ENCODE measurements at regions of chr16 and their contacts with region 1.

Region 1: DNA sequence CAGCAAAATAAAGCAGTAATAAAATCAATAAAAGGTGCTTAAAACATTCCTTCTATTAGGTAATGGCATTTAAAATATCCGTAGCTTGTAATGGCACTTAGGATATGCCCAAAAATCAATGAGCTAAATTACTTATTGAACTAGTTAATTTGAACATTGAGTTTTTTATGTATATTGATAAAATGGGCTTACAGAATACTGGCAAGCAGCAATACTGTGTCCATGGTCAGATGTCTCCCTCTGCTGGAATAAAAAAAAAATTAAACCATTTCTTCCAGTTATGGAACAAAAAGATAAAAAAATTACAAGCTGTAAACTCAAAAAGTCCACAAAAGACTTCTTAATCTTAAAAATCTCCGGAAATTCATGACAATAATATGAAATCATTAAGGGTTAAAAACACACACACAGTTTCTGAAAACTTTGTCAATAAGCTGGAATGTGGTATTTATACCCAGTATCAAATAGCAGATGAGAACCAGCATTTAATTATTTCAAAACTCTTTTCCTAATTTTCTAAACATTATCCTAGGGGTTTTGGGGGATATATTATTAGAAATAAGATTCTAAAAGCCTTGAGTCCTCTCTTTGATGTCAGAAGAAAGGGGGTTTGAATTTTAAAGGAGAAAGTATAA is 21.5 kb upstream of the PSMD7 start:
- DNase-seq: peak; percentile 62
- H3K4me3 ChIP-seq: no peak overlapping the region
- H3K27ac ChIP-seq: no peak overlapping the region
- H3K4me1 ChIP-seq: no peaks in the 10 kb centered on the region
- H3K27me3 ChIP-seq: no peaks in the 10 kb centered on the region
- CTCF ChIP-seq: peak; percentile 73

Region 2: GRCh38 chr16:73888840-73889490 is 386.2 kb before region 1 on chr16:
- CTCF ChIA-PET with region 1: no interaction called
- POLR2A ChIA-PET with region 1: no interaction called
- intact Hi-C with region 1: loop called (anchors 5 kb)
- DNase-seq: no peak
- H3K4me3 ChIP-seq: no peak overlapping the region
- H3K27ac ChIP-seq: no peak overlapping the region
- H3K4me1 ChIP-seq: no peaks in the 10 kb centered on the region
- H3K27me3 ChIP-seq: peaks cover 94% of the 10 kb centered on the region
- CTCF ChIP-seq: no peak

Region 3: DNA sequence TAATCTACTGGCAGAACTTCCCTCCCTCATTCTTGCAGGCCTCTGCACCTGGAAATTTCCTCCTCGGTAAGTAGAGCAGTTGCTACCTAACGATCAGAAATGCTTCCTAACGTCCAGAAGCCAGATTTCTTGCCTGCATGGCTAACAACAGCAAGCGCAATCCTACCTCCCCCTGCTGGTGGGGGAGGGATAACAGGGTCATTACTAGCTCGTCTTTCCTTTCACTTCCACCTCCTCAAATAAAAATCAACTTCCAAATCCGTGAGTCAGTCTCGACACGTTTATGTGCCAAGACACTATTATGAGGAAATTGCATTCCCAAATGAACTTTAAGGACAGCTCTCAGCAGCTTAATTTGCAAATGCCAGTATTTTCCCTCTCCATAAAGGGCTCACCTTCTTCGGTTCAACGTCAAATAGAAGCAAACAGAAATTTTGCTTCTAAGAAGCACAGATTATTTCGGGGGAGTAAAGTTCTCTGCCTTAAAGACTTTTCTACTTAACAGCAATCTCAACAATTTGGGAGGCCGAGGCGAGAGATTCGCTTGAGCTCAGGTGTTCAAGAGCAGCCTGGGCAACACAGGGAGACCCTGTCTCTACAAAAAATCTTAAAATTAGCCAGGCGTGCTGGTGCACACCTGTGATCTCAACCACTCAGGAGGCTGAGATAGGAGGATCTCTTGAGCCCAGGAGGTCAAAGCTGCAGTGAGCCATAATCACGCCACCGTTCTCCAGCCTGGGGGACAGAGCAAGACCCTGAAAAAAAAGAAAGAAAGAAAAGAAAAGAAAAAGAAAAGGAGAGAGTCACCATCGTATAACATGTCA is 167.1 kb before region 1 on chr16:
- CTCF ChIA-PET with region 1: no interaction called
- POLR2A ChIA-PET with region 1: no interaction called
- intact Hi-C with region 1: loop called (anchors 5 kb)
- DNase-seq: peak; percentile 79
- H3K4me3 ChIP-seq: peak overlapping the region; percentile 21
- H3K27ac ChIP-seq: no peak overlapping the region
- H3K4me1 ChIP-seq: peaks cover 6% of the 10 kb centered on the region
- H3K27me3 ChIP-seq: no peaks in the 10 kb centered on the region
- CTCF ChIP-seq: peak; percentile 86

Region 4: DNA sequence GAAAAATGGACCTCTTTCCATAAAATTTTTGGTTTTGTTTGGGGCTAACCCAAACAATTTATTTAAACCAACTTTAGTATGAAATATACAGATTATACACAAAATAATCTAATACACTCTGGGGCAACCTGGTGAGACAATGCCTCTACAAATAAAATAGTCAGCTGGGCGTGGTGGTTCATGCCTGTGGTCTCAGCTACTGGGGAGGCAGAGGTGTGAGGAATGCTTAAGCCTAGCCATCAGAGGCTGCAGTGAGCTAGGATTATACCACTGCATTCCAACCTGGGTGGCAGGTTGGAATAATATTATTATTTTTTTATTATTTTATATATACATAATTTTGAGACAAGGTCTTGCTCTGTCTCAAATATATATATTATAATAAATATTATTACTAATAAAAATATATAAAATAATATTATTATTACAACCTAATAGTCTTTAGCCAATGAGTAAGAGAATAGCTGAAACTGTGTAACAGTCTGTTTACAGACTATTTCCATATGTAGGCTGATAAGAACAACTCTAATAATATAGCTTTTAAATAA is 281.3 kb after region 1 on chr16:
- CTCF ChIA-PET with region 1: no interaction called
- POLR2A ChIA-PET with region 1: no interaction called
- intact Hi-C with region 1: no loop called
- DNase-seq: no peak
- H3K4me3 ChIP-seq: no peak overlapping the region
- H3K27ac ChIP-seq: peak overlapping the region; percentile 85
- H3K4me1 ChIP-seq: peaks cover 81% of the 10 kb centered on the region
- H3K27me3 ChIP-seq: no peaks in the 10 kb centered on the region
- CTCF ChIP-seq: no peak